ENCODE measurements at regions of chr12 and their contacts with region 1.

Region 1: GRCh38 chr12:30847259-30847658 is 79.3 kb upstream of the TSPAN11 start:
- DNase-seq: peak; percentile 62
- ATAC-seq: peak; percentile 48; the same call in 1 of the 2 replicates
- H3K4me3 ChIP-seq: no peak overlapping the region
- H3K27ac ChIP-seq: no peak overlapping the region
- H3K4me1 ChIP-seq: peaks cover 6 to 8% of the 10 kb centered on the region in 2 experiments; a peak in 2 of 4 replicates
- H3K27me3 ChIP-seq: no peaks in the 10 kb centered on the region
- CTCF ChIP-seq: peak; percentile 69 to 88 (median 78)
- POLR2A ChIP-seq: no peak
- RAD21 ChIP-seq: peak; percentile 91

Region 2: GRCh38 chr12:30985814-30986452 is 138.7 kb after region 1 on chr12:
- CTCF ChIA-PET with region 1: interaction called, 73 read pairs
- POLR2A ChIA-PET with region 1: interaction called, 7 read pairs
- RAD21 ChIA-PET with region 1: interaction called, 5 read pairs
- intact Hi-C with region 1: loop called (anchors 1 kb)
- DNase-seq: peak; percentile 27
- ATAC-seq: peak; percentile 91
- H3K4me3 ChIP-seq: no peak overlapping the region
- H3K27ac ChIP-seq: no peak overlapping the region
- H3K4me1 ChIP-seq: peaks cover 0 to 4% of the 10 kb centered on the region in 2 experiments; a peak in 2 of 4 replicates
- H3K27me3 ChIP-seq: no peaks in the 10 kb centered on the region
- CTCF ChIP-seq: peak; percentile 65 to 86 (median 71)
- POLR2A ChIP-seq: no peak
- RAD21 ChIP-seq: peak; percentile 77

Region 3: DNA sequence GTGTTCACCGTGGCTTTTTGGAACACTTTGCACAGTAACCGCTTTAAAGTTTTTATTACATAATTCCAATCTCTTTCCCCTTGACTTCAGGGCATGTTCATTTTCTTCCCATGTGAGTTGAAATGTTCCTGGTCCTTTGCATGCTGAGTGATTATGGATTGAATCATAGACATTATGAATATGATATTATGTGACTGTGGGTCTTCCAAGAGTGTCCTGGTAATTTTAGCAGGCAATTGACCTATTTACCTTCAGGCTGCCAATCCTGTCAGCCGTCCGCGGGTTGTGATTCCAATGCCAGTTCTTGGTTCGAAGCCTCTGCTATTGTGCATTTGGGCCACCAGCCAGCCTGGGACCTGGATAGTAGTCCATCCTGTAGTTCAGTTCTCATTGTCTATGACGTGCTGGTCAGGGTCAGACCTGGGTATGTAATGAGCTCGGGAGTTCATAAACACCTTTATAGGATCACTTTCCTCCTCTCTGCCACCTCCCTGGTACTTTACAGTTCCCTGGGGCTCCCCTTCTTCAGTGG is 193.8 kb after region 1 on chr12:
- CTCF ChIA-PET with region 1: no interaction called
- POLR2A ChIA-PET with region 1: no interaction called
- RAD21 ChIA-PET with region 1: no interaction called
- intact Hi-C with region 1: loop called (anchors 10 kb)
- DNase-seq: no peak
- ATAC-seq: no peak
- H3K4me3 ChIP-seq: no peak overlapping the region
- H3K27ac ChIP-seq: no peak overlapping the region
- H3K4me1 ChIP-seq: peaks cover 4 to 9% of the 10 kb centered on the region in 2 experiments; a peak in 3 of 4 replicates
- H3K27me3 ChIP-seq: no peaks in the 10 kb centered on the region
- CTCF ChIP-seq: no peak
- POLR2A ChIP-seq: no peak
- RAD21 ChIP-seq: no peak

Region 4: DNA sequence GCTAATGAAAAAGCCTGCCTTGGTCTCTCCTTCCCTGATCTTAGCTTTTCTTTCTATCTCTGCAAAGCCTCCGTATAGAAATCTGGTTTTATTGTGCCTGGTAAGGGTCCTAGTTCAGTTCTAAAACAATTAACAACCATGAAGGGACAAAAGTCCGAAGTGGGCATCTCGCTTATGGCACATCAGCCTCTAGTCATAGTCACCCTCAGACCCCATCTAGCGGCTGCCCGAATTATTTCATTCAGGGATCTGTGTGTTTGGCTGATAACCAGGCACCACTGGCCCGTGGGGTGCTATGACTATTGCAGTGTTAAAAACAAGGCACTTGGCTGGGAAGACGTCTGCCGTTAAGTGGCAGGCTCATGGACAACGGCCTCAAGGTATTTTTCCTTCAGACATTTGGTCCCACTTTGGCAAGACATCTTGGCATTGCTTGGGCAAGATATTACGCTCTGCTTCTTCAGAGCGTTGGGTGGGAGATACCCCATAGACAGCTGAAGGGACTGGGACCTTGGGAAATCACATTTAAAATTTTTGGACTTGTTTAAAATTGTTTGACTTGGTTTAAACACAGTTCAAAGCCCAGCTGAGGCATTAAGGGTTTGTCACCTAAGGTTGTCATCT is 391.6 kb after region 1 on chr12:
- CTCF ChIA-PET with region 1: interaction called, 6 read pairs
- POLR2A ChIA-PET with region 1: no interaction called
- RAD21 ChIA-PET with region 1: no interaction called
- intact Hi-C with region 1: loop called (anchors 1 kb)
- DNase-seq: peak; percentile 54
- ATAC-seq: peak; percentile 89
- H3K4me3 ChIP-seq: peak overlapping the region; percentile 14 to 39
- H3K27ac ChIP-seq: no peak overlapping the region
- H3K4me1 ChIP-seq: peaks cover 0 to 21% of the 10 kb centered on the region in 2 experiments; a peak in 1 of 4 replicates
- H3K27me3 ChIP-seq: no peaks in the 10 kb centered on the region; the same call in 1 of the 2 replicates
- CTCF ChIP-seq: peak; percentile 68 to 83 (median 76); a peak in 5 of 6 replicates
- POLR2A ChIP-seq: no peak
- RAD21 ChIP-seq: peak; percentile 71

Region 5: GRCh38 chr12:31272607-31273225 is 425.5 kb after region 1 on chr12:
- CTCF ChIA-PET with region 1: interaction called, 29 read pairs
- POLR2A ChIA-PET with region 1: no interaction called
- RAD21 ChIA-PET with region 1: interaction called in 1 of 2 experiments, 3 read pairs
- intact Hi-C with region 1: loop called (anchors 2 kb)
- DNase-seq: no peak
- ATAC-seq: no peak
- H3K4me3 ChIP-seq: no peak overlapping the region
- H3K27ac ChIP-seq: no peak overlapping the region
- H3K4me1 ChIP-seq: no peaks in the 10 kb centered on the region
- H3K27me3 ChIP-seq: no peaks in the 10 kb centered on the region
- CTCF ChIP-seq: no peak
- POLR2A ChIP-seq: no peak
- RAD21 ChIP-seq: no peak

Region 6: GRCh38 chr12:31629756-31630732 is 782.8 kb after region 1 on chr12:
- CTCF ChIA-PET with region 1: no interaction called
- POLR2A ChIA-PET with region 1: no interaction called
- RAD21 ChIA-PET with region 1: no interaction called
- intact Hi-C with region 1: loop called (anchors 10 kb)
- DNase-seq: no peak
- ATAC-seq: no peak
- H3K4me3 ChIP-seq: no peak overlapping the region
- H3K27ac ChIP-seq: no peak overlapping the region
- H3K4me1 ChIP-seq: peaks cover 0 to 4% of the 10 kb centered on the region in 2 experiments; a peak in 1 of 4 replicates
- H3K27me3 ChIP-seq: no peaks in the 10 kb centered on the region
- CTCF ChIP-seq: no peak
- POLR2A ChIP-seq: no peak
- RAD21 ChIP-seq: no peak